ENCODE measurements at regions of chr12 and their contacts with region 1.

Region 1: DNA sequence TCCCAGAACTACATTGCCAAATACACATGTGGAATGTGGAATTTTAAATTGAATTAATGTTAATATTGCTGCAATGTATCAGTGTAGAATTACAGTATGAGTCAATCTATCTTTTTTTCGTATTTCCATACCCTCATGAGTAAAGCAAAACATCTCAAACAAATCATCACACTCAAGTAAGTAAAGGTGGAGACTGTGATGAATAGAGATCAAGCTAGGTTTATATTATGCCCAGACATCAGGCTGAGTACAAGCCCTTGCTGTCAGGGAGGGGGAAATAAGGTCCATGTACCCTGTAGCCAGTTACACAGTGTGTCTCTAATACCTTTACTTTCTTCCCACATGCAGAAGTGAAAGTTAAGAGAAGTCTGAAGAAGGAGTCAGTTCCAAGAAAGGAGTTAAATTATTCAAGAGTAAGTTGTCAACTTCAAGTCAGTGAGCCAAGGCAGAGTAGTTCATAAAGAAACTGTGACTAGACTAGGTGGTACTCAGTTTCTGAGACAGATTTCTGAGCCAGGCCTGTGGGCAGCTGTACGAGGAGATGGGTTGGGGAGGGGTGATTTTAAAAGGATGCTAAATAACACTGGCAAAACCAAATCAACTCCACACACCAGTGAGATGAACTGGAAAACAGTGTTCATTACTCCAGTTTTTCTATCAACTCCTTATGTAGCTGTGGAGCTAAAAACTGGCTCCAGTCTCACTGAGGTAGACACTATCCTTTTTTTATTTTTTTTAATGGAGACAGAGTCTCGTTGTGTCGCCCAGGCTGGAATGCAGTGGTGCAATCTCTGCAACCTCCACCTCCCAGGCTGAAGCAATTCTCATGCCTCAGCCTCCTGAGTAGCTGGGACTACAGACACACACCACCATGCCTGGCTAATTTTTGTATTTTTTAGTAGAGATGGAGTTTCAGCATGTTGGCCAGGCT is 23.8 kb upstream of the STK38L start:
- DNase-seq: peak; percentile 90
- ATAC-seq: peak; percentile 85
- H3K4me3 ChIP-seq: no peak overlapping the region
- H3K27ac ChIP-seq: peak overlapping the region; percentile 96
- H3K4me1 ChIP-seq: peaks cover 43% of the 10 kb centered on the region
- H3K27me3 ChIP-seq: no peaks in the 10 kb centered on the region
- CTCF ChIP-seq: no peak
- EP300 ChIP-seq: no peak; a peak in 1 of 4 replicates
- POLR2A ChIP-seq: 0 out of 2 replicates have a peak, but pooled peaks have one; percentile 19
- RAD21 ChIP-seq: peak; percentile 3; the same call in 1 of the 2 replicates

Region 2: DNA sequence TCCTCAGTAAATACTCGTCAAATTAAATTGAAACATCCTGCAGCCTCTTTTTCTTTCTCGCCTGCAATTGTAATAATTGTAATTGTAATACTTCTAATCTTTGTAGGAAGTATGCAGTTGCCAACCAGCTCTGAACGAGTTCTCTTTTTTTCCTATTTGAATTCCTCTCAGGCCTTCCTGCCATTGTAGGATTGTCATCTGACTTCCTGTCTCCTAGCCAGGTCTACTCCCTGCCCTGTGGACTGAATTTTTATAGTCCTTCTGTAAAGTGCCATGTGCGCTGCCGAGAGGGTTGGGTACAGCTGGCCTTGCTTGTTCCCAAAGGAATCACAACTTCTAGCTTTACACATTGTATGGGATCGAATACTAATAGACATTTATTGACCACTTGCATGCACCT is 841.6 kb before region 1 on chr12:
- CTCF ChIA-PET with region 1: no interaction called
- POLR2A ChIA-PET with region 1: no interaction called
- RAD21 ChIA-PET with region 1: no interaction called
- SMC1A ChIA-PET with region 1: no interaction called
- in situ Hi-C with region 1: no loop called
- intact Hi-C with region 1: no loop called
- DNase-seq: no peak
- ATAC-seq: no peak
- H3K4me3 ChIP-seq: no peak overlapping the region
- H3K27ac ChIP-seq: no peak overlapping the region
- H3K4me1 ChIP-seq: no peaks in the 10 kb centered on the region
- H3K27me3 ChIP-seq: no peaks in the 10 kb centered on the region
- CTCF ChIP-seq: no peak
- EP300 ChIP-seq: no peak
- POLR2A ChIP-seq: no peak
- RAD21 ChIP-seq: no peak

Region 3: GRCh38 chr12:27142101-27142721 is 78.1 kb before region 1 on chr12:
- CTCF ChIA-PET with region 1: interaction called, 4 read pairs
- POLR2A ChIA-PET with region 1: interaction called, 3 read pairs
- RAD21 ChIA-PET with region 1: interaction called, 5 read pairs
- SMC1A ChIA-PET with region 1: interaction called, 15 read pairs
- in situ Hi-C with region 1: no loop called
- intact Hi-C with region 1: loop called (anchors 5 kb)
- DNase-seq: no peak
- ATAC-seq: peak; percentile 80
- H3K4me3 ChIP-seq: no peak overlapping the region
- H3K27ac ChIP-seq: no peak overlapping the region
- H3K4me1 ChIP-seq: peaks cover 9% of the 10 kb centered on the region; the same call in 1 of the 2 replicates
- H3K27me3 ChIP-seq: no peaks in the 10 kb centered on the region
- CTCF ChIP-seq: peak; percentile 72 to 79 (median 76)
- EP300 ChIP-seq: no peak
- POLR2A ChIP-seq: no peak
- RAD21 ChIP-seq: peak; percentile 87

Region 4: DNA sequence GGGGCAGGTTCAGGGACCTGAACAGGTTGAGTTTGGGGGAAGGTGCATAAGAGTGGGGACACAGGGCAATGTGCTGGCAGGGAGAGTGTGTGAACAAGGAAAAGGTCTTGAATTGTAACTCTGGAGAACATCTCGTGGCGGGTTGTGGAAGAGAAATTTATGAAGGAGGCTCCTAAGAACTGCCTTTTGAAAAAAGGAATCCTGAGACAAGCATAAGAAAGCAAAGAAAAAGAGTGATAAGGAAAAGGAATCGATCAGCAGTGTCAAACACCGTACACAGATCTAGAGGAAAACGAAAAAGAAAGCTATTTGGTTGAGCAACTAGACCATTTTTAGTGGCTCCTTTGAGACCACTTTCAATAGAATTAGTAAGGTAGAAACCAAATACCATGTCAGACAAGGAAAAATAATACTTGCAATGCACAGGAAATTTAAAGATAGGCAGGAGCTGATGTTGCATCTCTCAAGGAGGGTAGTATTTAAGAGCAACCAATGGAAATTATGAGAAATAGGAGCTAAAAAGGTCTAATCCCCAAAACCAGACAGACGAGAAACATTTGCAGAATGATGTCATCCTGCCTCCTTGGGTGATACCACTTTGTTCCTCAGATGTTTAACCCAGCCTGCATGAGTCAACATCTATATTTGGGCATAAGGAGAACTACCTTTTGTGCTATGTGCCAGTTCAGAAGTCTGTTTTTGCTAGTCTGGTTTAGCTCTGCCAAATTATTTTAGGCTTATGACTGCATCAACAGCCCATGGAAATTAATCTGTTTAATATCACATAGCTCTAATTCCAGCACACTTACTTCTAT is 40.7 kb before region 1 on chr12:
- CTCF ChIA-PET with region 1: interaction called, 6 read pairs
- POLR2A ChIA-PET with region 1: interaction called, 19 read pairs
- RAD21 ChIA-PET with region 1: interaction called, 36 read pairs
- SMC1A ChIA-PET with region 1: interaction called, 42 read pairs
- in situ Hi-C with region 1: no loop called
- intact Hi-C with region 1: loop called (anchors 5 kb)
- DNase-seq: peak; percentile 96
- ATAC-seq: peak; percentile 94
- H3K4me3 ChIP-seq: peak overlapping the region; percentile 23
- H3K27ac ChIP-seq: peak overlapping the region; percentile 94
- H3K4me1 ChIP-seq: peaks cover 37% of the 10 kb centered on the region
- H3K27me3 ChIP-seq: no peaks in the 10 kb centered on the region
- CTCF ChIP-seq: no peak
- EP300 ChIP-seq: peak; percentile 27 to 48; a peak in 1 of 4 replicates
- POLR2A ChIP-seq: 0 out of 2 replicates have a peak, but pooled peaks have one; percentile 22
- RAD21 ChIP-seq: no peak

Region 5: GRCh38 chr12:27199638-27200300 is 20.6 kb before region 1 on chr12:
- CTCF ChIA-PET with region 1: interaction called, 3 read pairs
- POLR2A ChIA-PET with region 1: interaction called, 4 read pairs
- RAD21 ChIA-PET with region 1: interaction called, 10 read pairs
- SMC1A ChIA-PET with region 1: interaction called, 145 read pairs
- in situ Hi-C with region 1: no loop called
- intact Hi-C with region 1: no loop called
- DNase-seq: no peak
- ATAC-seq: peak; percentile 41; the same call in 2 of the 3 replicates
- H3K4me3 ChIP-seq: no peak overlapping the region
- H3K27ac ChIP-seq: no peak overlapping the region
- H3K4me1 ChIP-seq: peaks cover 6% of the 10 kb centered on the region; the same call in 1 of the 2 replicates
- H3K27me3 ChIP-seq: no peaks in the 10 kb centered on the region
- CTCF ChIP-seq: no peak
- EP300 ChIP-seq: no peak
- POLR2A ChIP-seq: no peak
- RAD21 ChIP-seq: no peak

Region 6: DNA sequence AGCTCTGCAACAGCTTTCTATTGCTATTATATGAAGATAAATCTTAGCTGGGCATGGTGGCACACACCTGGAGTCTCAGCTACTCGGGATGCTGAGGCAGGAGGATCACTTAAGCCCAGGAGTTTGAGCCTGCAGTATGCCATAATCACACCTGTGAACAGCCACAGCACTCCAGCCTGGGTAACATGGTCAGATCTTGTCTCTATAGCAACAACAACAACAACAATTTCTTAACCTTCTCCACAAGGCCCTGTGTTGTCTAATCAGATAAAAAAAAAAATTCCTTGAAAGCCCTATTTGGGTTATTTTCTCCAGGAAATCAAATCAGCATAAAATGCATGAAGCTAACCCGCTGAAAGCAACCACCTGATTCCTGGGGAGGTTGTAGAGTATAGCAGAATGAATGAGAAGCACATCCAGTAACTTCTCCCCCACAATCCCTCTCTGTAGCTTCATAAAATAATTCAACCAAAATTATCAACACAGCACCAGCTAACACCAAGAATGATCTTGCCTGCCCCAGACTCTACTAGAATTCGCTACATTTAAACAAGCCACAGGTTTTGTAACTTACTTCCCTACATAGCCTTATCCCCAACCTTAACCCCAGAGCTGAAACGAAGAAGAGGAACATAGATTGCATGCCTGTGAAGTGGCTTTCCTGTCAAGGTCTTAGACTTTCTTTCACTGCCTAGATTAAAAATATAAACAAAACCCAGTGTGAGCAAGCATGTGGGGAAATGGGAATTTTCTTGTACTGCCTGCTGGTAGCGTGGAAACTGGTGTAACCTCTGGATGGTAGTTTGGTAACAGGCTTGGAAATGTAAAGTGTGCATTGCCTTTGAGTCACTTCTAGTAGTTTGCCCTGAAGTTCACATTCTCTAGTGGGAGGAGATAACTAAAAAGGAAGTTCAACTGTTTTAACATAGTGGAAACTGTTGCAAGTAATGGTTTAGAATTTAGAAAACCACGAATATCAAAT is 17.8 kb after region 1 on chr12:
- CTCF ChIA-PET with region 1: interaction called, 18 read pairs
- POLR2A ChIA-PET with region 1: interaction called, 35 read pairs
- RAD21 ChIA-PET with region 1: interaction called, 71 read pairs
- SMC1A ChIA-PET with region 1: interaction called, 103 read pairs
- in situ Hi-C with region 1: no loop called
- intact Hi-C with region 1: loop called (anchors 1 kb)
- DNase-seq: peak; percentile 72
- ATAC-seq: peak; percentile 82
- H3K4me3 ChIP-seq: peak overlapping the region; percentile 31
- H3K27ac ChIP-seq: peak overlapping the region; percentile 82
- H3K4me1 ChIP-seq: peaks cover 32% of the 10 kb centered on the region
- H3K27me3 ChIP-seq: no peaks in the 10 kb centered on the region
- CTCF ChIP-seq: no peak
- EP300 ChIP-seq: peak in 1 of 2 experiments; percentile 40; a peak in 1 of 4 replicates
- POLR2A ChIP-seq: no peak
- RAD21 ChIP-seq: peak; percentile 7; the same call in 1 of the 2 replicates

Region 7: DNA sequence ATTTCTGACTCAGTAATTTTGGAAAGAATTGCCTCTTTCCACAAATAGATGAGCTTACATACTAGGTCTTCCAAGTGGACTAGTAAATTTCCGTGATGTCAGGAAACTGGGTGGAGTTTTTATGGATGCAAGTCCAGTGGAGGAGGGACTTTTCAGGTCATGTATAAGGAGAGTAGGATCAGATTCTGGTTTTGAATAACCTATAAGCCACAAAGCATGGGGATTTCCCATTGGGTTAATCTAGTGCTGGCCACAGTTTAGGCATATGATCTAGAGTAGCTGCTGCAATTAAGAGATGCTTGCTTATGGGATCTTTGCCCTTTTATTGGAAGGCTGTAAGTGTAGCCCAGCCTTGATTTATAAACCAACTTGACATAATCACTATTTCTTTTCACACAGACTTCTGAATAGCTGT is 57.5 kb after region 1 on chr12:
- CTCF ChIA-PET with region 1: interaction called, 3 read pairs
- POLR2A ChIA-PET with region 1: interaction called, 17 read pairs
- RAD21 ChIA-PET with region 1: interaction called, 26 read pairs
- SMC1A ChIA-PET with region 1: interaction called, 49 read pairs
- in situ Hi-C with region 1: no loop called
- intact Hi-C with region 1: no loop called
- DNase-seq: peak; percentile 73
- ATAC-seq: peak; percentile 91
- H3K4me3 ChIP-seq: no peak overlapping the region
- H3K27ac ChIP-seq: peak overlapping the region; percentile 61; the same call in 1 of the 2 replicates
- H3K4me1 ChIP-seq: peaks cover 22% of the 10 kb centered on the region
- H3K27me3 ChIP-seq: no peaks in the 10 kb centered on the region
- CTCF ChIP-seq: no peak
- EP300 ChIP-seq: peak; percentile 64 to 71; a peak in 3 of 4 replicates
- POLR2A ChIP-seq: no peak
- RAD21 ChIP-seq: no peak

Region 8: GRCh38 chr12:27293463-27293862 is 73.1 kb after region 1 on chr12:
- CTCF ChIA-PET with region 1: interaction called, 3 read pairs
- POLR2A ChIA-PET with region 1: interaction called, 3 read pairs
- RAD21 ChIA-PET with region 1: interaction called, 14 read pairs
- SMC1A ChIA-PET with region 1: interaction called, 87 read pairs
- in situ Hi-C with region 1: no loop called
- intact Hi-C with region 1: no loop called
- DNase-seq: no peak
- ATAC-seq: no peak
- H3K4me3 ChIP-seq: no peak overlapping the region
- H3K27ac ChIP-seq: no peak overlapping the region
- H3K4me1 ChIP-seq: peaks cover 18% of the 10 kb centered on the region
- H3K27me3 ChIP-seq: no peaks in the 10 kb centered on the region
- CTCF ChIP-seq: no peak
- EP300 ChIP-seq: no peak
- POLR2A ChIP-seq: no peak
- RAD21 ChIP-seq: no peak